A549 (cell line): ENCODE measurements at regions of chr14 and their contacts with region 1.

Region 1: GRCh38 chr14:68191567-68192321 is 372.2 kb downstream of the RAD51B start:
- DNase-seq: peak; percentile 62 to 99
- ATAC-seq: peak; percentile 98
- H3K4me3 ChIP-seq: peak overlapping the region; percentile 6; the same call in 1 of the 3 replicates
- H3K27ac ChIP-seq: peak overlapping the region; percentile 93 to 98
- H3K4me1 ChIP-seq: peaks cover 66% of the 10 kb centered on the region
- CTCF ChIP-seq: no peak; the same call in 2 of the 3 replicates
- EP300 ChIP-seq: peak; percentile 98 to 99
- POLR2A ChIP-seq: no peak
- RAD21 ChIP-seq: peak; percentile 60 to 85

Region 2: GRCh38 chr14:68124979-68125731 is 66.6 kb before region 1 on chr14:
- CTCF ChIA-PET with region 1: no interaction called
- POLR2A ChIA-PET with region 1: interaction called, 12 read pairs
- DNase-seq: peak; percentile 51 to 80
- ATAC-seq: peak; percentile 92 to 95
- H3K4me3 ChIP-seq: no peak overlapping the region
- H3K27ac ChIP-seq: peak overlapping the region; percentile 75 to 88
- H3K4me1 ChIP-seq: peaks cover 34% of the 10 kb centered on the region
- CTCF ChIP-seq: no peak
- EP300 ChIP-seq: peak in 1 of 2 experiments; percentile 38; a peak in 1 of 5 replicates
- POLR2A ChIP-seq: no peak
- RAD21 ChIP-seq: no peak; a peak in 1 of 5 replicates

Region 3: GRCh38 chr14:68172627-68173026 is 19.1 kb before region 1 on chr14:
- CTCF ChIA-PET with region 1: interaction called, 3 read pairs
- POLR2A ChIA-PET with region 1: interaction called, 16 read pairs
- DNase-seq: peak; percentile 65 to 93
- ATAC-seq: peak; percentile 92 to 94
- H3K4me3 ChIP-seq: no peak overlapping the region
- H3K27ac ChIP-seq: peak overlapping the region; percentile 88 to 94
- H3K4me1 ChIP-seq: peaks cover 73% of the 10 kb centered on the region
- CTCF ChIP-seq: no peak
- EP300 ChIP-seq: peak; percentile 30 to 45; a peak in 2 of 5 replicates
- POLR2A ChIP-seq: no peak
- RAD21 ChIP-seq: peak; percentile 15 to 35; a peak in 4 of 5 replicates

Region 4: GRCh38 chr14:68248481-68249255 is 56.9 kb after region 1 on chr14:
- CTCF ChIA-PET with region 1: interaction called, 23 read pairs
- POLR2A ChIA-PET with region 1: interaction called, 4 read pairs
- DNase-seq: peak; percentile 61 to 86
- ATAC-seq: peak; percentile 81 to 84
- H3K4me3 ChIP-seq: no peak overlapping the region
- H3K27ac ChIP-seq: peak overlapping the region; percentile 95 to 97
- H3K4me1 ChIP-seq: peaks cover 76% of the 10 kb centered on the region
- CTCF ChIP-seq: peak; percentile 83
- EP300 ChIP-seq: no peak
- POLR2A ChIP-seq: no peak
- RAD21 ChIP-seq: peak; percentile 93 to 97